Right cardiac atrium (tissue), 5 donors: ENCODE measurements at regions of chr10 and their contacts with region 1.

Region 1: DNA sequence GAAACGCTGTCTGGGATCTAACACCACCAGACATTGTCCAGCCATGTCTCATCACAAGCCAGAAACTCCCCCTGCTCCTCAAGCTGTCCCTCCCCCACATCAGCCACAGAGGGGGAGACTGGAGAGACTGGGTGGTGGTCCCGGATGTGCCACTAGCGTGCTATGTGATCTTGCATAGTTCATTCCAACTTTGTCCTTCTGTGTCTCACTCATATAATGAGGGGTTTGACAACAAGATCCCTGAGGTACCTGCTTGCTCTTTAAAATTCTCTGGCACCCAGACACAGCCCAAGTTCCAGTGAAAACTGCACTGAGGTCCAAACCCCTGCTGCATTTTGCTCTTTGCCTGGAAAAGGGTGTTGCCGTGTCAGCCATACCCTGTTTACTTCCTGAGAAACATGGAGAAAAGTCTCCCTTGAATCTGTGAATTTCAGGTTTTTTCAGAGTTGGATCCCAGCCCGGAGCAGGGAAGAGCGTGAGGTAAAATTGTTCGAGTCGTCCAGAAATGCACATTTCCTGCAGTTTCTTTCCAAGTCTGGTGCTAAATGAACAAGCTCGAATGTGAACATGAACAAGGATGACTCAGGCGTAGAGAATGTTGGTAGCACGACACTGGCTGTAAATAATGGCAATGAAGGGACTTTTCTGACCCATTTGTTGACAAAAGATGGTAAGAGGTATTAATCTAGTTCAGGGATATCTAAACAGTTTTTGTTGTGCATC is 156.5 kb downstream of the CCDC3 start:
- DNase-seq: no peak
- ATAC-seq: peak; percentile 40 to 59
- H3K4me3 ChIP-seq: no peak overlapping the region
- H3K27ac ChIP-seq: no peak overlapping the region
- H3K4me1 ChIP-seq: peaks cover 5% of the 10 kb centered on the region
- H3K27me3 ChIP-seq: no peaks in the 10 kb centered on the region

Region 2: GRCh38 chr10:12656518-12657142 is 188.3 kb before region 1 on chr10:
- intact Hi-C with region 1: no loop called
- DNase-seq: no peak
- ATAC-seq: peak; percentile 44 to 51
- H3K4me3 ChIP-seq: no peak overlapping the region
- H3K27ac ChIP-seq: no peak overlapping the region
- H3K4me1 ChIP-seq: no peaks in the 10 kb centered on the region
- H3K27me3 ChIP-seq: no peaks in the 10 kb centered on the region

Region 3: DNA sequence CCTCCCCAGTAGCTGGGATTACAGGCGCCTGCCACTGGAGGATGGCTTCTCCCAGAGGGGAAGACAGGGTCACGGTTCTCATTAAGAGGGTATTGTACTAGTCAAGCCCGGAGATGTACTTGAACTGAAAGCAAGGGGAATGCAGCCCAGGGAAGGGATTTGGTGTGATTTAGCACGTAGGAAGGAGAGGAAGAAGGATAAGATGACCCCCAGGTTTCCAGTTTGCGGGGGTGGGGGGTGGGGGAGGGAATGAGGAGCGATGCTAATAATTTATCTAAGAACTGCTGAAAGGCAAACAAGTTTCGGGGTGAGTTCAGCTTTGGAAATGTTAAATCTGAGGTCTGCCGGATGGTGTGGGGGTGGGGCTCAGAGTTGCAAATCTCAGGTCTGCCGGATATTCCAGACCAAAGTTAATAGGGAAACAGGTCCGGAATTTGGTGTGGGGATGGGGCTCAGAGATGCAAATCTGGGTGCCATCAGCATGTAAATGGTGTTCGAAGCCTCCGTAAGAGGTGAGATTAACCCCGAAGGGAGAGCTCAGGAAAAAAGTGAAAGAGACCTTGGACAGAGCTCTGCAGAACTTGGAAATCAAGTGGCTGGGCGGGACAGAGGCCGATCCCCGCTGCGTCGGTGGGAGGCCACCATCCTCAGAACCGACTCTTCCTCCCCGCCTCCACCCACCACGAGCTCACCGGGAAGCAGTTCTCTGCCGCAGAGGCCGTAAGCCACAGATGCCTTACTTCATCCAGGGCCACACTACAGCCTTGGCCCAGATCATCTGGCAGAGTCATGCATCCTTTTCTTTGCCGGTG is 504.7 kb after region 1 on chr10:
- intact Hi-C with region 1: loop called in 1 of 4 experiments (anchors 10 kb)
- DNase-seq: peak; percentile 56 to 77 (median 76)
- ATAC-seq: peak; percentile 45 to 51
- H3K4me3 ChIP-seq: peak overlapping the region; percentile 97
- H3K27ac ChIP-seq: no peak overlapping the region
- H3K4me1 ChIP-seq: no peaks in the 10 kb centered on the region
- H3K27me3 ChIP-seq: no peaks in the 10 kb centered on the region